Activated CD8-positive, alpha-beta T cell treated with anti-CD3 and anti-CD28 coated beads, Interleukin-2, amount 10 ng/mL, durations not matched to agents 7 days and 5 days (primary cell): ENCODE measurements at regions of chr3 and their contacts with region 1.

Region 1: GRCh38 chr3:114375608-114376421 is 82.0 kb downstream of the TIGIT start:
- DNase-seq: no peak
- ATAC-seq: no peak
- H3K4me3 Mint-ChIP-seq: no peak overlapping the region
- H3K27ac Mint-ChIP-seq: no peak overlapping the region
- H3K4me1 Mint-ChIP-seq: no peaks in the 10 kb centered on the region
- H3K27me3 Mint-ChIP-seq: no peaks in the 10 kb centered on the region

Region 2: GRCh38 chr3:114362815-114363214 is 13.0 kb before region 1 on chr3:
- CTCF ChIA-PET with region 1: interaction called, 16 read pairs
- POLR2A ChIA-PET with region 1: no interaction called
- DNase-seq: no peak
- ATAC-seq: no peak
- H3K4me3 Mint-ChIP-seq: no peak overlapping the region
- H3K27ac Mint-ChIP-seq: no peak overlapping the region
- H3K4me1 Mint-ChIP-seq: no peaks in the 10 kb centered on the region
- H3K27me3 Mint-ChIP-seq: no peaks in the 10 kb centered on the region